Endothelial cell of umbilical vein (primary cell): ENCODE measurements at regions of chr10 and their contacts with region 1.

Region 1: GRCh38 chr10:5434017-5434753 is 21.8 kb downstream of the NET1 start:
- DNase-seq: peak; percentile 67
- H3K4me3 ChIP-seq: no peak overlapping the region
- H3K27ac ChIP-seq: no peak overlapping the region
- H3K4me1 ChIP-seq: no peaks in the 10 kb centered on the region
- H3K27me3 ChIP-seq: no peaks in the 10 kb centered on the region
- CTCF ChIP-seq: peak; percentile 42 to 50
- POLR2A ChIP-seq: no peak

Region 2: DNA sequence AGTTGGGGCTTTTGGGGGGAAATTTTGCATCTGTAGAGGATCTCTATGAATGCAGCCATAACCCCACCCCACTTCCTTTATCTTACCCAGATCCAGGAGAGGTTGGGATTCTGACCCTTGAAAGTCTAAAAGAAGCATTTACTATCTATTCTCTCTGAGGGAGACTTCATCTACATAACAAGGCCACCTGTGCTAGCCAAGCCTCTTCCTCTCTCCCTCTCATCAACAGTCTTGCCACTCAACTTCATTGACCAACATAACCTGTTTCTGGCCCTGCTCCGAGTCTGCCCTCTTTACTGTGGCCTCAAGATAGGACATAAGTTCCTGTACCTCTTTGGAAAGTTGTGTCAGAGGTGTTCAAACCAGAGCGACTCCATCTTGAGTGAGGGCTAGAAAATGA is 49.0 kb before region 1 on chr10:
- CTCF ChIA-PET with region 1: interaction called, 10 read pairs
- POLR2A ChIA-PET with region 1: no interaction called
- dilution Hi-C with region 1: no loop called
- intact Hi-C with region 1: loop called (anchors 2 kb)
- DNase-seq: no peak
- H3K4me3 ChIP-seq: no peak overlapping the region
- H3K27ac ChIP-seq: no peak overlapping the region
- H3K4me1 ChIP-seq: no peaks in the 10 kb centered on the region
- H3K27me3 ChIP-seq: peaks cover 0 to 2% of the 10 kb centered on the region in 2 experiments
- CTCF ChIP-seq: no peak
- POLR2A ChIP-seq: no peak

Region 3: GRCh38 chr10:5416981-5417380 is 17.2 kb before region 1 on chr10:
- CTCF ChIA-PET with region 1: interaction called, 10 read pairs
- POLR2A ChIA-PET with region 1: no interaction called
- dilution Hi-C with region 1: no loop called
- intact Hi-C with region 1: no loop called
- DNase-seq: no peak
- H3K4me3 ChIP-seq: no peak overlapping the region
- H3K27ac ChIP-seq: no peak overlapping the region
- H3K4me1 ChIP-seq: peaks cover 10% of the 10 kb centered on the region
- H3K27me3 ChIP-seq: no peaks in the 10 kb centered on the region
- CTCF ChIP-seq: no peak
- POLR2A ChIP-seq: no peak

Region 4: GRCh38 chr10:5423771-5424170 is 10.4 kb before region 1 on chr10:
- CTCF ChIA-PET with region 1: interaction called, 39 read pairs
- POLR2A ChIA-PET with region 1: no interaction called
- dilution Hi-C with region 1: no loop called
- intact Hi-C with region 1: no loop called
- DNase-seq: peak; percentile 55
- H3K4me3 ChIP-seq: no peak overlapping the region
- H3K27ac ChIP-seq: no peak overlapping the region
- H3K4me1 ChIP-seq: peaks cover 14% of the 10 kb centered on the region
- H3K27me3 ChIP-seq: no peaks in the 10 kb centered on the region
- CTCF ChIP-seq: no peak
- POLR2A ChIP-seq: no peak